ENCODE measurements at regions of chr10 and their contacts with region 1.

Region 1: DNA sequence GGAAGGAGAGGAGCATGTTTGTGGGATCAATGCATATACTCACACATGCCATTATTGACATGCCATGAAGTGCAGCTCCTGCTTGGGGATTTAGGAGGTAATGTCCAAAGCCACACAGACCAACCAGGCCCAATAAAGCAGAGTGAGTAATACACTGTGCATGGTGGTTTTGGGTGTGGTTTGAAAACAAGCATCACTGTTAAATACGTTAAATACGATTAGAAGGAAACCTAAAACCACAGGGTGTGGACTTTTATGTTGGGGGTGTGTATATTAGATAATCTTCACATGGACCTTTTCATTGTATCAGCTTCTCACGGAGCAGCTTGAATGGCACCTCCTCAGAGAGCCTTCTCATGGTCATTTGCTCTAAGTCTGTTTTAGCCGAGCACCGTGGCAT is 10.4 kb upstream of the EIF3A start:
- DNase-seq: peak; percentile 95
- H3K4me3 ChIP-seq: no peak overlapping the region
- H3K27ac ChIP-seq: peak overlapping the region; percentile 35
- H3K4me1 ChIP-seq: peaks cover 22% of the 10 kb centered on the region
- H3K27me3 ChIP-seq: no peaks in the 10 kb centered on the region
- CTCF ChIP-seq: no peak

Region 2: DNA sequence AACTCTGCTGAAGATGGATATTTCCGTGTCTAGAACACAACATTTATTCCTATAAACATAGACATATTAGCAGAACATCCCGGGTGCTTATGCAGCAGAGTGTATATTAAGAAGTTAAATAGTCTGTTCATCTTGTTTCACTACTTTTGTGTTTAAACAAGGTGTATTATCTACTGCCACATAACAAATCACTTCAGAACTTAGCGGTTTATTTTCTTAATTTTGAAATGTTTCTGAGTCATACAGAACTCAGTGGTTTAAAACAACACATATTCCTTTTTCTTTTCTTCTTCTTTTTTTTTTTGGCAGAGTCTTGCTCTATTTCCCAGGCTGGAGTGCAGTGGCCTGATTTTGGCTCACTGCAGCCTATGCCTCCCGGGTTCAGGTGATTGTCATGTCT is 38.8 kb after region 1 on chr10:
- CTCF ChIA-PET with region 1: no interaction called
- dilution Hi-C with region 1: no loop called
- in situ Hi-C with region 1: no loop called
- intact Hi-C with region 1: no loop called
- DNase-seq: no peak
- H3K4me3 ChIP-seq: no peak overlapping the region
- H3K27ac ChIP-seq: no peak overlapping the region
- H3K4me1 ChIP-seq: no peaks in the 10 kb centered on the region
- H3K27me3 ChIP-seq: no peaks in the 10 kb centered on the region
- CTCF ChIP-seq: no peak

Region 3: GRCh38 chr10:119165171-119166110 is 74.5 kb after region 1 on chr10 and contains the start of gene SFXN4:
- CTCF ChIA-PET with region 1: no interaction called
- dilution Hi-C with region 1: loop called (anchors 5 kb)
- in situ Hi-C with region 1: no loop called
- intact Hi-C with region 1: no loop called
- DNase-seq: peak; percentile 48
- H3K4me3 ChIP-seq: peak within 1 kb of the TSS; percentile 75 to 94 (median 79)
- H3K27ac ChIP-seq: peak within 1 kb of the TSS; percentile 46
- H3K4me1 ChIP-seq: peaks cover 16% of the 10 kb centered on the region
- H3K27me3 ChIP-seq: no peaks in the 10 kb centered on the region
- CTCF ChIP-seq: no peak
- total RNA-seq, gene SFXN4: 11.3 to 22.6 TPM